ENCODE measurements at regions of chr6 and their contacts with region 1.

Region 1: GRCh38 chr6:84967389-84967788 is 203.0 kb upstream of the TBX18 start:
- DNase-seq: peak; percentile 32 to 65 (median 36)
- ATAC-seq: peak; percentile 90
- H3K4me3 ChIP-seq: no peak overlapping the region
- H3K27ac ChIP-seq: no peak overlapping the region
- H3K4me1 ChIP-seq: no peaks in the 10 kb centered on the region
- H3K27me3 ChIP-seq: peaks cover 0 to 5% of the 10 kb centered on the region in 2 experiments; a peak in 2 of 5 replicates
- CTCF ChIP-seq: peak; percentile 62 to 74 (median 65)
- EP300 ChIP-seq: no peak
- POLR2A ChIP-seq: no peak
- RAD21 ChIP-seq: peak; percentile 83 to 89

Region 2: GRCh38 chr6:84546427-84546914 is 420.9 kb before region 1 on chr6:
- CTCF ChIA-PET with region 1: no interaction called
- POLR2A ChIA-PET with region 1: no interaction called
- in situ Hi-C with region 1: no loop called
- intact Hi-C with region 1: loop called (anchors 10 kb)
- DNase-seq: no peak
- ATAC-seq: no peak
- H3K4me3 ChIP-seq: no peak overlapping the region
- H3K27ac ChIP-seq: no peak overlapping the region
- H3K4me1 ChIP-seq: peaks cover 0 to 11% of the 10 kb centered on the region in 2 experiments; a peak in 4 of 5 replicates
- H3K27me3 ChIP-seq: 0 out of 5 replicates have a peak, but pooled peaks cover 0 to 5% of the 10 kb centered on the region in 2 experiments
- CTCF ChIP-seq: no peak
- EP300 ChIP-seq: no peak
- POLR2A ChIP-seq: no peak
- RAD21 ChIP-seq: no peak

Region 3: DNA sequence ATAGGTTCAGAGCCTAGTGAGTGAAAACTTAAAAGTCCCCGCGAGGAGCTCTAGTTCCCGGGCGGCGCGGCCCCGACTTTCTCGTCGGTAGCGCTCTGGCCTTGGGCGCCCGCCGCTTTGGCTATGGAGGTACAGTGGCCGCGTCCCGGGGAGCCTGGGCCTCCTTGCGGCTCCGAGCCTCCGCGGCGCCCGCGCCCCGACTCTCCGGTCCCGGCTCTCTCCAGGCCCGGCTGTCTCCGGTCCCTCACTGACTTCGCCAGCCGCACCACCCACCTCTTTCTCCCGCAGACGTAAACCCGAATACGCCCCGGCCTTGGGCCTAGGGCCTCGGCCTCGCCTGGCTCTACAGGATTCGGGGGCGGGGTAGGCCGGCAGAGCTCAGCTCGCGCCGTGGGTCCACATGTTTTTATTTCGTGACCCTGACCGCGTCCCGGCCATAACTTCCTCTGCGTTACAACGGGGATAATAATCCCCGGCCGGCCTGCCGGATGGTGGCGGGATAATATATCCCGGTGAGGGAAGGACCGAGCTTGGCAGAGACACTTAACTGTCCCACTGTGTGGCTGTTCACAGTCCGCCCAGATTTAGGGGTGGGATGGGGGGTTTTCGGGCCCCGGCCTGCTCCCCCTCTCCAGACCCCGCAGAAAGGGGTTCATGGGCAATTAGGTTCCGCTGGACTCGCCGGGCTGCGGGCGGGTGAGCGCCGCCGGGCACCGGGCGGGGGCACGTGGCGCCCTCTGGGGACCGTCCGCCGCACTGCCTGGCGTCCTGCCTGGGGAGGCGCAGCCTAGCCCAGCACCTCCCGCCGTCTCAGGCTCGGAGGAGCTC is 193.0 kb before region 1 on chr6:
- CTCF ChIA-PET with region 1: no interaction called
- POLR2A ChIA-PET with region 1: no interaction called
- in situ Hi-C with region 1: no loop called
- intact Hi-C with region 1: loop called (anchors 10 kb)
- DNase-seq: peak; percentile 46 to 60 (median 52)
- ATAC-seq: peak; percentile 92
- H3K4me3 ChIP-seq: peak overlapping the region; percentile 37
- H3K27ac ChIP-seq: peak overlapping the region; percentile 37; the same call in 1 of the 3 replicates
- H3K4me1 ChIP-seq: peaks cover 2 to 22% of the 10 kb centered on the region in 2 experiments; a peak in 2 of 5 replicates
- H3K27me3 ChIP-seq: peaks cover 0 to 1% of the 10 kb centered on the region in 2 experiments; a peak in 2 of 5 replicates
- CTCF ChIP-seq: peak; percentile 48 to 68 (median 54); a peak in 5 of 6 replicates
- EP300 ChIP-seq: no peak
- POLR2A ChIP-seq: 0 out of 2 replicates have a peak, but pooled peaks have one; percentile 1
- RAD21 ChIP-seq: peak; percentile 20 to 49; a peak in 3 of 4 replicates

Region 4: DNA sequence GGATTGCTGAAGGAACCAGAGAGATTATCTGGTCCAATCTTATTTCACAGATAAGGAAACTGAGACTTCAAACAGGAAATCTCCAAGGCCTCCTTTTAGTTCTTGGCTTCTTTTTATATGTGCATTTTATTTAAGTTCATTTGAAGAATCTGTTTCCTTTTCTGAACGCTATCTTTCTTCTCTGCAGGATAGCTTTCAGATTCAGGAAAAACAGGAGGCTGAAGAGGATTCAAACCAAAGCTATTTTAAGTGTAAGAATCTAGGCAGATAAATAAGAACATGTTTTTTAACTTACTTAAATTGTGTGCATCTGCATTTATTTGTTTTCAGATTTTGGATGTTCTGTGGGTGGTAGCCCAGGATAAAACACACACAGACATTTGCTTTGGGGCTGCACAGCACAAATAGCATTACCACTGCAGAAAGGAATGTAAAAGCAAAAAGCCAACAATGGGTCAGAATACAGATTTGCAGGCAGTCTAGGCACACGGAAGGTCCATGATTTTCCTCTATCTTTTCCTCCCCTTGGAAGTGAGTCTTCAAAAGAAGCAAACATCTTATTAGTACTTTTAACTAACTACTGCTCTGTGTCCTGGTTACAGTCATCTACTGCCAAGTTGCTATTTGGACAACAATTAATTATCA is 14.2 kb before region 1 on chr6:
- CTCF ChIA-PET with region 1: no interaction called
- POLR2A ChIA-PET with region 1: no interaction called
- in situ Hi-C with region 1: no loop called
- intact Hi-C with region 1: no loop called
- DNase-seq: no peak
- ATAC-seq: no peak
- H3K4me3 ChIP-seq: no peak overlapping the region
- H3K27ac ChIP-seq: no peak overlapping the region
- H3K4me1 ChIP-seq: no peaks in the 10 kb centered on the region
- H3K27me3 ChIP-seq: no peaks in the 10 kb centered on the region
- CTCF ChIP-seq: no peak
- EP300 ChIP-seq: no peak
- POLR2A ChIP-seq: no peak
- RAD21 ChIP-seq: no peak

Region 5: GRCh38 chr6:85172705-85173104 is 205.3 kb after region 1 on chr6:
- CTCF ChIA-PET with region 1: no interaction called
- POLR2A ChIA-PET with region 1: no interaction called
- in situ Hi-C with region 1: no loop called
- intact Hi-C with region 1: no loop called
- DNase-seq: no peak
- ATAC-seq: no peak
- H3K4me3 ChIP-seq: no peak overlapping the region
- H3K27ac ChIP-seq: no peak overlapping the region
- H3K4me1 ChIP-seq: no peaks in the 10 kb centered on the region
- H3K27me3 ChIP-seq: no peaks in the 10 kb centered on the region
- CTCF ChIP-seq: no peak
- EP300 ChIP-seq: no peak
- POLR2A ChIP-seq: no peak
- RAD21 ChIP-seq: no peak

Measured in K562 (cell line).